Common myeloid progenitor, CD34-positive (primary cell): ENCODE measurements at regions of chr1 and their contacts with region 1.

Region 1: GRCh38 chr1:175154629-175155472 is 37.7 kb downstream of the KIAA0040 start:
- DNase-seq: peak; percentile 56 to 83 (median 77)
- H3K4me3 ChIP-seq: no peak overlapping the region
- H3K27ac ChIP-seq: no peak overlapping the region
- H3K4me1 ChIP-seq: peaks cover 0 to 9% (median 5%) of the 10 kb centered on the region in 4 experiments
- H3K27me3 ChIP-seq: peaks cover 0 to 28% (median 9%) of the 10 kb centered on the region in 5 experiments

Region 2: GRCh38 chr1:175169305-175170018 is 14.6 kb after region 1 on chr1:
- CTCF ChIA-PET with region 1: interaction called, 16 read pairs
- POLR2A ChIA-PET with region 1: no interaction called
- DNase-seq: no peak
- H3K4me3 ChIP-seq: no peak overlapping the region
- H3K27ac ChIP-seq: no peak overlapping the region
- H3K4me1 ChIP-seq: no peaks in the 10 kb centered on the region
- H3K27me3 ChIP-seq: no peaks in the 10 kb centered on the region

Region 3: GRCh38 chr1:175183586-175183985 is 28.7 kb after region 1 on chr1:
- CTCF ChIA-PET with region 1: interaction called, 13 read pairs
- POLR2A ChIA-PET with region 1: interaction called, 3 read pairs
- DNase-seq: no peak
- H3K4me3 ChIP-seq: no peak overlapping the region
- H3K27ac ChIP-seq: no peak overlapping the region
- H3K4me1 ChIP-seq: peaks cover 7 to 21% (median 12%) of the 10 kb centered on the region in 4 experiments
- H3K27me3 ChIP-seq: no peaks in the 10 kb centered on the region

Region 4: GRCh38 chr1:175227021-175227420 is 72.2 kb after region 1 on chr1:
- CTCF ChIA-PET with region 1: no interaction called
- POLR2A ChIA-PET with region 1: no interaction called
- DNase-seq: no peak
- H3K4me3 ChIP-seq: no peak overlapping the region
- H3K27ac ChIP-seq: no peak overlapping the region
- H3K4me1 ChIP-seq: no peaks in the 10 kb centered on the region
- H3K27me3 ChIP-seq: no peaks in the 10 kb centered on the region

Region 5: GRCh38 chr1:175270361-175270760 is 115.5 kb after region 1 on chr1:
- CTCF ChIA-PET with region 1: no interaction called
- POLR2A ChIA-PET with region 1: no interaction called
- DNase-seq: no peak
- H3K4me3 ChIP-seq: no peak overlapping the region
- H3K27ac ChIP-seq: no peak overlapping the region
- H3K4me1 ChIP-seq: no peaks in the 10 kb centered on the region
- H3K27me3 ChIP-seq: peaks cover 0 to 3% (median 0%) of the 10 kb centered on the region in 5 experiments

Region 6: GRCh38 chr1:175307160-175307559 is 152.3 kb after region 1 on chr1:
- CTCF ChIA-PET with region 1: interaction called, 27 read pairs
- POLR2A ChIA-PET with region 1: no interaction called
- DNase-seq: no peak
- H3K4me3 ChIP-seq: no peak overlapping the region
- H3K27ac ChIP-seq: no peak overlapping the region
- H3K4me1 ChIP-seq: no peaks in the 10 kb centered on the region
- H3K27me3 ChIP-seq: no peaks in the 10 kb centered on the region

Region 7: GRCh38 chr1:175319418-175320230 is 164.8 kb after region 1 on chr1:
- CTCF ChIA-PET with region 1: interaction called, 167 read pairs
- POLR2A ChIA-PET with region 1: interaction called, 5 read pairs
- DNase-seq: peak; percentile 60 to 80 (median 72)
- H3K4me3 ChIP-seq: peak overlapping the region in 1 of 7 experiments; percentile 7
- H3K27ac ChIP-seq: no peak overlapping the region
- H3K4me1 ChIP-seq: peaks cover 0 to 4% (median 1%) of the 10 kb centered on the region in 4 experiments
- H3K27me3 ChIP-seq: peaks cover 0 to 5% (median 0%) of the 10 kb centered on the region in 5 experiments